ENCODE measurements at regions of chr12 and their contacts with region 1.

Region 1: GRCh38 chr12:87667378-87667777 is 361.8 kb downstream of the C12orf50 start:
- DNase-seq: peak; percentile 31
- H3K4me3 ChIP-seq: no peak overlapping the region
- H3K27ac ChIP-seq: no peak overlapping the region
- H3K4me1 ChIP-seq: no peaks in the 10 kb centered on the region
- H3K27me3 ChIP-seq: no peaks in the 10 kb centered on the region
- CTCF ChIP-seq: peak; percentile 66 to 68

Region 2: DNA sequence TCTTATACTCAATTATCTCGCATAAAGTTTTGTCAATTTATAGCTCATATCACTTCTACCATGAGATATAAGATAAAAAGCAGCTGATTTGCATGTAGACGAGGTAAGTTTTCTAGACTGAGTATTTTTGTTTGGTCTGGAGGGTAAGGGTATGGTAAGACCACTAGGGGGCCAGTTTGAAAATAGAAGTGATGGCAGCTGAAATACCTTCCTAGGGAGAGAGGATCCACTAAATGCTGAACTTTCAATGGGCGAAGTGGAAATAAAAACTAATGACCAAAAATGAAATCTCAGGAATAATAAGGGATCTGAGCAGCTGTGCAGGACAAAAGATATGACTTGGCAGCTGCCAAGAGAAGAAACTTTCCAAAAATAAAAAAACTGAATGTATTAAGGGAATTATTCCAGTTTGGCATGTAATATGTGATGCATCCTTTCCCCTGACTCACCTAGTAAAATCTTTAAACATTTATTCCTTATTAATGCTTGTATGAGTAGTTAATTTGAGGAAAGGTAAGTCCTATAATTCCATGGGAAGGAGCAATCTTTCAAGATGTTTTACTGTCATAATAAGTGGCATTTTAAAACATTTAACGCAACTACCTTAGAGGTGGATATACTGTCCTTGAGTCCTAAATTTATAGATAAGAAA is 392.7 kb before region 1 on chr12:
- CTCF ChIA-PET with region 1: no interaction called
- dilution Hi-C with region 1: no loop called
- in situ Hi-C with region 1: no loop called
- intact Hi-C with region 1: loop called (anchors 2 kb)
- DNase-seq: peak; percentile 7
- H3K4me3 ChIP-seq: no peak overlapping the region
- H3K27ac ChIP-seq: no peak overlapping the region
- H3K4me1 ChIP-seq: no peaks in the 10 kb centered on the region
- H3K27me3 ChIP-seq: no peaks in the 10 kb centered on the region
- CTCF ChIP-seq: peak; percentile 43 to 52

Region 3: GRCh38 chr12:87344699-87345098 is 322.7 kb before region 1 on chr12:
- CTCF ChIA-PET with region 1: no interaction called
- dilution Hi-C with region 1: no loop called
- in situ Hi-C with region 1: loop called in 1 of 2 experiments (anchors 25 kb)
- intact Hi-C with region 1: loop called (anchors 1 kb)
- DNase-seq: no peak
- H3K4me3 ChIP-seq: no peak overlapping the region
- H3K27ac ChIP-seq: no peak overlapping the region
- H3K4me1 ChIP-seq: no peaks in the 10 kb centered on the region
- H3K27me3 ChIP-seq: no peaks in the 10 kb centered on the region
- CTCF ChIP-seq: peak; percentile 21 to 52

Region 4: DNA sequence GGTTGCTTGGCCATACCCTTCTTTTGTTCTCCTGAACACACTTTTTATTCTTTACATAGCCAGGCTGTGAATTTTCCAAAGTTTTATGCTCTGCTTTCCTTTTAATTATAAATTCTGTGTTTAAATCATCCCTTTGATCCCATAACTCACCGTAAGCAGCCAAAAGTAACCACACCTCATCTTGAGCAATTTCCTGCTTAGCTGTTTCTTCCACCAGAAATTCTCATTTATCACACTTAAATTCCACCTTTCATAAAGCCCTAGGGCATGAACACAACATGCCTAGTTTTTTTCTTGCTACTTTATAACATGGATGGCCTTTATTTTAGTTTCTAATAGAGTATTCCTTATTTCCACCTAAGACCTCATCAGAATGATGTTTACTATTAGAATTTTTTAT is 148.9 kb before region 1 on chr12:
- CTCF ChIA-PET with region 1: no interaction called
- dilution Hi-C with region 1: no loop called
- in situ Hi-C with region 1: no loop called
- intact Hi-C with region 1: no loop called
- DNase-seq: peak; percentile 60
- H3K4me3 ChIP-seq: no peak overlapping the region
- H3K27ac ChIP-seq: no peak overlapping the region
- H3K4me1 ChIP-seq: peaks cover 14% of the 10 kb centered on the region
- H3K27me3 ChIP-seq: no peaks in the 10 kb centered on the region
- CTCF ChIP-seq: no peak

Region 5: GRCh38 chr12:87784350-87784749 is 117.0 kb after region 1 on chr12:
- CTCF ChIA-PET with region 1: no interaction called
- dilution Hi-C with region 1: no loop called
- in situ Hi-C with region 1: no loop called
- intact Hi-C with region 1: no loop called
- DNase-seq: no peak
- H3K4me3 ChIP-seq: no peak overlapping the region
- H3K27ac ChIP-seq: no peak overlapping the region
- H3K4me1 ChIP-seq: no peaks in the 10 kb centered on the region
- H3K27me3 ChIP-seq: no peaks in the 10 kb centered on the region
- CTCF ChIP-seq: no peak

Measured in mammary epithelial cell (primary cell).